ENCODE measurements at regions of chr17 and their contacts with region 1.

Region 1: GRCh38 chr17:4986951-4987766 is at the start of gene CAMTA2:
- DNase-seq: peak; percentile 94 to 98
- ATAC-seq: peak; percentile 95
- H3K4me3 ChIP-seq: peak within 1 kb of the TSS; percentile 67 to 93
- H3K27ac ChIP-seq: peak within 1 kb of the TSS; percentile 25 to 90
- H3K4me1 ChIP-seq: peaks cover 0 to 3% of the 10 kb centered on the region in 2 donors
- H3K27me3 ChIP-seq: no peaks in the 10 kb centered on the region
- total RNA-seq, gene CAMTA2: 62.2 to 68.1 TPM

Region 2: DNA sequence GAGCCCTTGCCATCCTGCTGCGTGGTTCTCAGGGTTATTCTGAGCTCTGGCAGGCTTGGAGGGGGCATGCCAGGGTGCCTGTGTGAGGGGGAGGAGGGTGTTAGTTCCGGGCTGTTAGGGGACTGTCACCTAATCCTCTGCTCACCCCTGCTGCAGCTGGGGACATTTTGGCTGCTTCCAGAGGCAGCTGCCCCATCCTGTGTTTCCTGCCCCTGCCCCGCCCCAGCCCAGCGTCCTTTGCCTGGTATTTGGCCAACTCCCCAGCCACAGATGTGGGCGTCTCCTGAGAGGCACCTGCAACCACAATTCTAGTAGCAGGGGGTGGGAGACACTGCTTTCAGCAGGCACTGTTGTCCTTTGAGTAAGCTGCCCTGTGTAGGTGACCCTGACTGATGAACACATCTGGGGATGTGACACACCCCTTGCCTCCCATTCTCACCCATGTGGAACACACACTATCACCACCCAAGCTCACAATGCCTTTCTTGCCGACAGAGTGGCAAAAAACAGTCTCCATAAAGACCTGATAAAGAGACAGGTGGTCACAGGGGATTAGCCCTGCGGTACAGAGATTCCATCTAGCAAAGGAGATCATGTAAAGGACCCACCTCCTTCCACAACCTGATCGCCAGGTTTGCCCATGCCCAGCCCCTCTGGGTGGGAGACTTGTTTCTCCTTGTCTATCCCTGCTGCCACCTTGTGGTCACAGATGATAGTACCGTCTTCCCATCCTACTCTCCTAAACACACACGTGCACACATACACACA is 83.9 kb before region 1 on chr17 and contains the start of gene CHRNE:
- intact Hi-C with region 1: loop called (anchors 10 kb)
- DNase-seq: peak in 1 of 2 donors; percentile 77
- ATAC-seq: no peak
- H3K4me3 ChIP-seq: no peak within 1 kb of the TSS
- H3K27ac ChIP-seq: no peak within 1 kb of the TSS
- H3K4me1 ChIP-seq: no peaks in the 10 kb centered on the region
- H3K27me3 ChIP-seq: no peaks in the 10 kb centered on the region
- total RNA-seq, gene CHRNE: 0.84 to 1.6 TPM

Region 3: GRCh38 chr17:4966844-4967538 is 20.2 kb before region 1 on chr17:
- intact Hi-C with region 1: no loop called
- DNase-seq: peak; percentile 97 to 99
- ATAC-seq: peak; percentile 96
- H3K4me3 ChIP-seq: peak overlapping the region; percentile 51 to 65
- H3K27ac ChIP-seq: peak overlapping the region in 1 of 2 donors; percentile 62
- H3K4me1 ChIP-seq: peaks cover 0 to 2% of the 10 kb centered on the region in 2 donors
- H3K27me3 ChIP-seq: no peaks in the 10 kb centered on the region

Region 4: GRCh38 chr17:5019475-5019956 is 32.4 kb after region 1 on chr17:
- intact Hi-C with region 1: no loop called
- DNase-seq: no peak
- ATAC-seq: no peak
- H3K4me3 ChIP-seq: no peak overlapping the region
- H3K27ac ChIP-seq: no peak overlapping the region
- H3K4me1 ChIP-seq: no peaks in the 10 kb centered on the region
- H3K27me3 ChIP-seq: no peaks in the 10 kb centered on the region

Region 5: DNA sequence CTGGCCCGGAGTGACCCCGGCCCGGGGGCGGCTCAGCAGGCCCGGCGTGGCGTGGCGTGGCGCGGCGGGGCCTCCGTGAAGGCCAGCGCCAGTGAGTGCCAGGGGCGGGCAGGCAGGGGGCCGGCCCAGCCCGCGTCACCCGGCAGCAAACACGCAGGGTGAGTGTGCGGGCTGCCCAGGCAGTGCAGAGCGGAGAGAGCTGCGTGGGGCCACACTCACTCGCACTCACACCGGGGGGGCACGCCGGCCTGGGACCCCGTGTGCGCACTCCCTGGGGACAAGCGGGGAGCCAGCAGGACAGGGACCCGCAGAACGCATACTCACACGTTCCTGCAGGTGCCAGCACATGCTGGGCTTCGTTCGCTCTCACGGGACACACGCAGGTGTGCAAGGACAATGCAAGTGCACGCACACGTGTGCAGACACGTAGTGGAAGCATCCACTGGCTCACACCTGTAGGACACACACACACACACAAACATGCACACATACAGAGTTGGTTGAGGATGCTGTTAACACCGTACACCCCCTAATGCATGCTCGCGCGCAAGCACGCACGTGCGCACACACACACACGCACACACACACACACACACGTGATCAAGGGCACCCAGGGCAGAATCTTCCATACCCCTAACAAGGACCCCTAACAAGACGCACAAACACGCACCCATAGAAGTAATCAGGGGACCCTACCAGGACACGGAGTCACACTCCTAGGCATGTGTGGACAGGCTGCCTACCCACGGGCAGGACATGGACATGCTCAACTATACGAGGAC is 136.4 kb after region 1 on chr17:
- intact Hi-C with region 1: no loop called
- DNase-seq: peak in 1 of 2 donors; percentile 55
- ATAC-seq: peak; percentile 44
- H3K4me3 ChIP-seq: no peak overlapping the region
- H3K27ac ChIP-seq: no peak overlapping the region
- H3K4me1 ChIP-seq: no peaks in the 10 kb centered on the region
- H3K27me3 ChIP-seq: no peaks in the 10 kb centered on the region

Measured in aorta (tissue), 5 donors.